ENCODE measurements at regions of chr1 and their contacts with region 1.

Region 1: GRCh38 chr1:211830330-211831142 is at the start of gene LPGAT1:
- DNase-seq: peak; percentile 74
- H3K4me3 ChIP-seq: peak within 1 kb of the TSS; percentile 90 to 95
- H3K27ac ChIP-seq: peak within 1 kb of the TSS; percentile 82 to 88
- H3K4me1 ChIP-seq: no peaks in the 10 kb centered on the region
- H3K27me3 ChIP-seq: no peaks in the 10 kb centered on the region
- CTCF ChIP-seq: peak; percentile 61 to 82 (median 71)
- POLR2A ChIP-seq: peak; percentile 33
- total RNA-seq, gene LPGAT1: 29.6 to 81.7 TPM

Region 2: DNA sequence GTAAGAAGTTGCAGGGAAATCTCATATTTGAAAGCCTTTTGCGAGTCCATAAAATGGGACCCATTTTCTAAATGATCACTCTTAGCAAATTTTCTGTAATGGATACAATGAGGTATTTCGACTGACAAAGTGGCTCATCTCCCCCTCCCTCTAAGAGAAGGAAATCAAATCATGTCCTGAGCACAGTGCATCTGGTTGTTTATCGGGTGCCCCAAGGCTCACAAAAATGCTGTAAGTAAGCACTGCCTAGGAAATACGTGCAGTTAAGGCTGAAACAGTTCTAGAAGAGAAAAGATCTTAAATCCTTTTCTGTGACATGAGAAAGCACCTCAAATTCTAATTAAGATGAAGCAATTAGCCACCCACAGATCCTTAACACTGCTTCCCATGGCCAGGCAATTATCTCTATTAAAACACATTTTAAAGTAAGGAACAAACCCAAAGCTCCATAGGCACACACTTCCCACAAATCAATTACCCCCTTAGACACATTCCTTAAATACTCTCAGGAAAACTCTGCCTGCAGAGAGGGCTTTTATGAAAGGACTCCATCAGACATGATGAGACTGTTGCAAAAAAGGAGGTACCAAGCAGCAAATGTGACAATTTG is 912.9 kb before region 1 on chr1:
- intact Hi-C with region 1: no loop called
- DNase-seq: no peak
- H3K4me3 ChIP-seq: no peak overlapping the region
- H3K27ac ChIP-seq: no peak overlapping the region
- H3K4me1 ChIP-seq: no peaks in the 10 kb centered on the region
- H3K27me3 ChIP-seq: no peaks in the 10 kb centered on the region
- CTCF ChIP-seq: no peak
- POLR2A ChIP-seq: no peak

Region 3: DNA sequence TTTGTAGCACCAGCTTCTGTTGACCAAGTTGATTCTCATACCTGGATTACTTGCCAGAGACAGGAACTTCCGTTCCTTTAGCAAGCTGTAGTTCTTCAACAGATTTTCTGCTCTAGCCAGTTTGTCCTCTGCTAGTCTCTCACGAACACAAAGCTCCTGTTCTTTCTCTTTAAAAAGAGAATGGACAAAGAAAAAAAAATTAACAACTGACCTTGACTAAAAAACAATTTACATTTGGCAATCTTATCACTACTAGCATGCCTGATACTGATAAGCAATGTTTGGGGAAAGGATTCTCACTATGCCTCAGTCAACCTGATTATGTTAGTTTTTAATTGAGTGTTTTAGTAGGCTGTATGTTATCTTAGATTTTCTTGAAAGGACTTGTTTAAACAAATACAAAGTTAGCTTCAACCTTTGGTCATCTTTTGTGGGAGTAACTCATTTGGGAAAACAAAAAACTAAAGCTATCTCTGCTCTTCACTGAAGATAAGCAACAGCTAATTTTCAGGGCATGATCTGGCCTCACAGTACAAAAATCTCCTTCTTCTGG is 163.4 kb before region 1 on chr1:
- intact Hi-C with region 1: no loop called
- DNase-seq: no peak
- H3K4me3 ChIP-seq: no peak overlapping the region
- H3K27ac ChIP-seq: no peak overlapping the region
- H3K4me1 ChIP-seq: no peaks in the 10 kb centered on the region
- H3K27me3 ChIP-seq: no peaks in the 10 kb centered on the region
- CTCF ChIP-seq: no peak
- POLR2A ChIP-seq: no peak

Region 4: GRCh38 chr1:211680752-211681327 is 149.7 kb before region 1 on chr1:
- intact Hi-C with region 1: loop called (anchors 5 kb)
- DNase-seq: peak; percentile 59
- H3K4me3 ChIP-seq: no peak overlapping the region
- H3K27ac ChIP-seq: no peak overlapping the region
- H3K4me1 ChIP-seq: no peaks in the 10 kb centered on the region
- H3K27me3 ChIP-seq: no peaks in the 10 kb centered on the region
- CTCF ChIP-seq: peak in 3 of 4 experiments; percentile 59 to 85 (median 78)
- POLR2A ChIP-seq: no peak

Region 5: DNA sequence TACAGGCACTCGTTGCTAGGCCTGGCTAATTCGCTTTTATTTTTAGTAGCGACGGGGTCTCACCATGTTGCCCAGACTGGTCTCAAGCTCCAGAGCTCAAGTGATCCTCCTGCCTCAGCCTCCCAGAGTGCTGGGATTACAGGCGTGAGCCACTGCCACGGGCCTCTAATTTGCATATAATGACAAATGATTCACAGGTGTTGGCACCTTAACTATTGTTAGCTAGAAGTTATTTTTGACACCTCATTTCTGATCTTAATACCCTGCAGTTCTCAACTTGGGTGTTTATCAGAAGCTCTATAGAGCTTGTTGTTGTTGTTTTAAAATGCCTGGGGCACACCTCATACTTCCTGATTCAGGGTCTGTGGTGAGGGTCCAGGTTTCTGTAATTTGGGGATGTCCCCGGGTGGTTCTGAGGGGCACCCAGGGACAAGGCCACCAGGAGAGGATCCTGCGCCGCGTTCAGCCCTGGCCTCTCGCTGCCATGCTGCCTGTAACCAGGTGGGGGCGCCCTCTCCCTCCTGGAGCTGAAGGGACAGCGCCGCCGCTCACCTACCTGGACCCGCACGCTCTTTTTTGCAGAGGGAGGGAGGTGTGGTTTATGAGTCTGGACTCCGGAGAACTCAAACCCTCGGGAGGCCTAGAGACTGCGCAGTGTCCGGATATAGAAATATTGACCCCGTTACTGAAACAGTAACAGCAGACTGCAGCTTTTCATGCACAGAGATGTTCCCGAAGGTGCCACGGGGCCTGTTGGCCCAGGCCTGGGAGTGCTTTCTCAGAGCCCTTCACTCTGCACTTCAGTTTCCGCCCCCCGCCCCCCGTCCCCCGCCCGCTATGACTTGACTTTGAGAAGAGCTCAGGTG is 132.1 kb before region 1 on chr1:
- intact Hi-C with region 1: loop called (anchors 2 kb)
- DNase-seq: peak; percentile 83
- H3K4me3 ChIP-seq: no peak overlapping the region
- H3K27ac ChIP-seq: no peak overlapping the region
- H3K4me1 ChIP-seq: no peaks in the 10 kb centered on the region
- H3K27me3 ChIP-seq: no peaks in the 10 kb centered on the region
- CTCF ChIP-seq: peak; percentile 87 to 96 (median 91)
- POLR2A ChIP-seq: no peak

Measured in prostate gland (tissue), 2 donors.